GM12878 (cell line): ENCODE measurements at regions of chr18 and their contacts with region 1.

Region 1: DNA sequence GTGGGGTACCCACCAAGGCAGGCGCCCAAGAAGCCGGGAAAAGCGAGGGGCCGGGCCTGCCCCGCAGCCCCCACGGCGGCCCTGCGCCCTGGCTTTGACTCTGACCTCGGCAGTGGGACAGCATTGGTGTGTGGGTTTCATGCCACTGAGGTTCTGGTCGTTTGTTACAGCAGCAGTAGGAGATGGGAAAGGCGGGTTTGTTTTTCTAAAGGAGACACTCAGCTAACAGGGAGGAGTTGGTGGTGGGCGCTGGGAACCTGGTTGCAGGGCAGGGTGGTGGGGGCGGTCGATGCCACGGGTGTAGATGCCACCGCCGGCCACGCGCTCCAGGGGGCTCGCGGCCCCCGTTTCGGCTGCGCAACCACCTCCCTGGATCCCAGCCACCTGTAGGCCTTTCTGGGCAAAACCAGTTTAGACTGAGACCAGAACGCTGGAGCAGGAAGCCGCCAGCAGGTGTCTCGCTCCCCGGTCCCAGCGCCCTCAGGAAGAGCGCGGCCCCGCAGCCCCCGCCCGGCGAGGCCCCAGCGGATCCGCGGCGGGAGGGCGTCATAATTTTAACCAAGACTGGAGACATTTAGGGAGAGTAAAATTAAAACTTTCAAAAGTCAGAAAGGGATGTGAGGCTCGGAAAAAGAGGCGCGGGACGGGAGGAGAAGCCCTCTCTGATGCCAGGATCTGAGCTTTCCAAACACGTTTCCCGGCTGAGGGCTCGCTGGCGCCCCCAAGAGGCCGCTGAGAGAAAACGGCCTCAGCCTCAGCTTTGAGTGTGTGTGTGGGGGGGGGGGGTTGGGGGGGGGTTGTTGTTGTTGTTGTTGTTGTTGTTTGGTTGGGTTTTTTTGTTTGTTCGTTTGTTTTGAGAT is 17.4 kb downstream of the CIDEA start:
- DNase-seq: peak; percentile 13
- ATAC-seq: peak; percentile 96
- H3K4me3 ChIP-seq: peak overlapping the region; percentile 55; the same call in 1 of the 2 replicates
- H3K27ac ChIP-seq: no peak overlapping the region
- H3K4me1 ChIP-seq: no peaks in the 10 kb centered on the region
- H3K27me3 ChIP-seq: no peaks in the 10 kb centered on the region; a peak in 1 of 4 replicates
- CTCF ChIP-seq: peak; percentile 48 to 67 (median 59)
- EP300 ChIP-seq: no peak
- POLR2A ChIP-seq: no peak
- RAD21 ChIP-seq: peak; percentile 34; the same call in 1 of the 2 replicates

Region 2: GRCh38 chr18:12257996-12258720 is 13.4 kb before region 1 on chr18:
- CTCF ChIA-PET with region 1: interaction called, 12 read pairs
- POLR2A ChIA-PET with region 1: no interaction called
- RAD21 ChIA-PET with region 1: no interaction called
- SMC1A ChIA-PET with region 1: no interaction called
- in situ Hi-C with region 1: no loop called
- intact Hi-C with region 1: no loop called
- DNase-seq: no peak
- ATAC-seq: no peak
- H3K4me3 ChIP-seq: no peak overlapping the region
- H3K27ac ChIP-seq: no peak overlapping the region
- H3K4me1 ChIP-seq: no peaks in the 10 kb centered on the region
- H3K27me3 ChIP-seq: peaks cover 3 to 15% of the 10 kb centered on the region in 2 experiments
- CTCF ChIP-seq: no peak
- EP300 ChIP-seq: no peak
- POLR2A ChIP-seq: no peak
- RAD21 ChIP-seq: no peak

Region 3: DNA sequence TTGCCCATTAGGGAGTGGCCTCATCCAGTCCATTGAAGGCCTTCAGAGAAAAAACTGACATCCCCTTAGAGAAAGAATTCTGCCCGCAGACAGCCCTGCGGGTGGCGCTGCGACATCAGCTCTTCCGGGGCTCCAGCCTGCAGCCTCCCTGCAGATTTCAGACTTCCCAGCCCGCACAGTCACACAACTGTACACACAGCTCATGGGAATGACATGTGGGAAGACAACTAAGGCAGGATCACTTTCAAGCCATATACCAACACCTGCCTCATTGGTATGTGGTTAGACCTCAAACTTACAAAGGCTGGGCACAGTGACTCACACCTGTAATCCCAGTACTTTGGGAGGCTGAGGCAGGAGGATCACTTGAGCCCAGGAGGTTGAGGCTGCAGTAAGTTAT is 11.7 kb after region 1 on chr18:
- CTCF ChIA-PET with region 1: interaction called, 19 read pairs
- POLR2A ChIA-PET with region 1: interaction called, 6 read pairs
- RAD21 ChIA-PET with region 1: no interaction called
- SMC1A ChIA-PET with region 1: no interaction called
- in situ Hi-C with region 1: no loop called
- intact Hi-C with region 1: no loop called
- DNase-seq: no peak
- ATAC-seq: no peak
- H3K4me3 ChIP-seq: no peak overlapping the region
- H3K27ac ChIP-seq: no peak overlapping the region
- H3K4me1 ChIP-seq: no peaks in the 10 kb centered on the region
- H3K27me3 ChIP-seq: peaks cover 5 to 6% of the 10 kb centered on the region in 2 experiments; a peak in 3 of 4 replicates
- CTCF ChIP-seq: peak in 1 of 3 experiments; percentile 12; a peak in 2 of 6 replicates
- EP300 ChIP-seq: no peak
- POLR2A ChIP-seq: no peak
- RAD21 ChIP-seq: 0 out of 2 replicates have a peak, but pooled peaks have one; percentile 18